ENCODE measurements at regions of chr4 and their contacts with region 1.

Region 1: DNA sequence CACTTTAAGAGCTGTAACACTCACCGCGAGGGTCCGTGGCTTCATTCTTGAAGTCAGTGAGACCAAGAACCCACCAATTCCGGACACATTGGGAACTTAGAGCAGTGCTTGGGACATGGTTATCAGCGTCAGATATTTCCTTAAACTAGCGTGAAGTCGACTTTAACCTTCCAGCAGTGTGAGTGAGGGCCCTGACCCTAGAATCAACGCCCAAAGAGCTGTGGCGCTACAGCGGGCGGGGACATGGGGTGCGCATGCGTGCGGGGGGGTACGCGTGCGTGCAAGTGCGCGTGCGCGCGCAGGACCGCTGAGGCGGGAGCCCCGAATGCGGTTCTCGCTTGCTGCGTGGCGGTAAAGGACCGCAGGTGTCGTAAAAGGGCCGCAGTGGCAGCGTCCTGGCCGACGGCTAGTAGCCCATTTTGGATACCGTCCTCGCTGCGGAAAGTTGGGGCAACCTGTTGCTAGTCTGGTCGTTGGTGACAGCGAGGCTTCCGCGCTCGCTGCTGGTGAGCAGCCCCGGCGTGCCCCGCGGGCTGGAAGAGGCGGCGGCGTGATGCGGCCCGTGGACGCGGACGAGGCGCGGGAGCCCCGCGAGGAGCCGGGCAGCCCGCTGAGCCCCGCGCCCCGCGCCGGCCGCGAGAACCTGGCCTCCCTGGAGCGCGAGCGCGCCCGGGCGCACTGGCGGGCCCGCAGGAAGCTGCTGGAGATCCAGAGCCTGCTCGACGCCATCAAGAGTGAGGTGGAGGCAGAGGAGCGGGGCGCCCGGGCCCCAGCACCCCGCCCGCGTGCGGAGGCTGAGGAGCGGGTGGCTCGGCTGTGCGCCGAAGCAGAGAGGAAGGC is 19.8 kb upstream of the S100P start:
- DNase-seq: peak; percentile 89 to 97 (median 95)
- ATAC-seq: peak; percentile 93
- H3K4me3 ChIP-seq: peak overlapping the region; percentile 74
- H3K4me3 Mint-ChIP-seq: peak overlapping the region; percentile 90 to 100 (median 98)
- H3K27ac ChIP-seq: peak overlapping the region; percentile 83
- H3K27ac Mint-ChIP-seq: peak overlapping the region; percentile 88 to 100 (median 98)
- H3K4me1 ChIP-seq: peaks cover 30 to 34% of the 10 kb centered on the region in 2 donors
- H3K4me1 Mint-ChIP-seq: peaks cover 33 to 53% (median 50%) of the 10 kb centered on the region in 7 donors
- H3K27me3 ChIP-seq: no peaks in the 10 kb centered on the region
- H3K27me3 Mint-ChIP-seq: peaks cover 0 to 3% (median 0%) of the 10 kb centered on the region in 5 donors

Region 2: DNA sequence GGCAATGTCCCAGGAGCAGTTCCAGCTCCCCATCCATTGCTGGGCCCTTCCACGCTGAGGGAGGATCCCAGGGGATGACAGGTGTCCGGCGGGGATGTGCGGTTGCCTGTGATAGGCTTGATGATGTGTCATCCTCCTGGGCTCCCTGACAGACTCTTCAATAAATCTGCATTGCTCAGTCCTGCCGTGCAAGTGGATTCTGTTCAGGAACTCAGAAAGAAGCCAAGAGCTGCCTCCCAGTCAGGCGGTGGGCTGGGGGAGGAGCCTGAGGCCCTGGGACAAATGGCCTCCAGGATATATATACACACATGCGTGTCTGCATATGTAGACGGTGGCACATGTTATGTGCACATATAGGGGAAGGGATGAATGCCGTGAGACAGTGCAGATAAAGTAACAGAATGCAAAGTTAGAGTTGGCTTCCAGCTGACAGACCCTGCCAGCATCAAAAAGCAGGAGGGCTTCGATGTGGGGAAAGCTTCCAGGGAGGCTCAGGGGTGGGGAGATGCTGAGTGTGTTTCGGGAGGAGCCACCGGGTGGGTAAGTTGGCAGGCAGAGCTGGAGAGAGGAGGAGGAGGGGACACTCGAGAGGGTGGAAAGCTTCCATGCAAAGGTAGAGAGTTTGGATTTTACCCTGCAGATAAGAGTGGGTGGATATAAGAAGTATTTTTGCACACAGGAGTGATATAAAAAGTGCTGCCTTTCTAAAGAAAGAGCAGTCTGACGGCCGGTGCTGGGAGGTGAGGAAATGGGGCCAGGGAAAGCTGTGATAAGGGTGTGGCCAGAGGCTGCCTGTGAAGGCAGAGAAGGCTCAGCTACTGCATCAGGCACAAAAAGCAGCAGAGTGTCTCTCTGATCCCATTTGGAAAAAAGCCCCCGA is 752.5 kb before region 1 on chr4:
- CTCF ChIA-PET with region 1: no interaction called
- POLR2A ChIA-PET with region 1: no interaction called
- intact Hi-C with region 1: no loop called
- DNase-seq: no peak
- ATAC-seq: no peak
- H3K4me3 ChIP-seq: no peak overlapping the region
- H3K4me3 Mint-ChIP-seq: no peak overlapping the region
- H3K27ac ChIP-seq: no peak overlapping the region
- H3K27ac Mint-ChIP-seq: no peak overlapping the region
- H3K4me1 ChIP-seq: no peaks in the 10 kb centered on the region
- H3K4me1 Mint-ChIP-seq: peaks cover 0 to 2% (median 0%) of the 10 kb centered on the region in 7 donors
- H3K27me3 ChIP-seq: no peaks in the 10 kb centered on the region
- H3K27me3 Mint-ChIP-seq: peaks cover 0 to 50% (median 11%) of the 10 kb centered on the region in 5 donors

Region 3: DNA sequence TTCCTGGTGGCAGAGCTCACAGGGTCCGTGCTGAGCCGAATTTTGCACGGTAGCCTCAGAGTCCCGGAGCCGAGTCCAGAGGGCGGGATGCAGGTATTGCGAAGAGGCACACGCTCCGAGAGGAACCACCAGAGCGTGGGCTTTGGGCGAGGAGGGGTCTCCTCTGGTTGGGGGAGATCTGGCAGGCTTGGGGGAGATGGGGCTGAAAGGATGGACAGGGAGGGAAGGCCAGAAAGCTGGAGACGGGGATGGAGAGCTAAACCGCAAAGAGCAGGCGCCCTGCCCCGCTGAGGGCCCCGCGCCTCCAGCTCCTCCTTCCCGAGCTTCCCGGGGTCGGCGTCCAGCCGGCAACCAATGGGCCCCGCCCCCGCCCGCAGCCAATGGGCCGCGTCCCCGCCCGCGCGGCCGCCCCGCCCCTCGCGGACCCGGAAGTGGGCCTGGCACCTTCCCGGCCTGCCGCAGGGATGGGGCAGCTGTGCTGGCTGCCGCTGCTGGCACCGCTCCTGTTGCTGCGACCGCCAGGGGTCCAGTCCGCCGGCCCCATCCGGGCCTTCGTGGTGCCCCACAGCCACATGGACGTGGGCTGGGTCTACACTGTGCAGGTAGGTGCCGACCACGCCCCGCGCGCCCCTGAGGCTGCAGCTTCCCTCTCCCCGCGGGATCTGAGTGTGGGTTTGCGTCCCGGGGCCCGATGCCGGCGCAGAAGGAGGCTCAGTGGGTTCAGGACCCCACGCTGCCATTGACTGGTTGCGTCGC is 99.0 kb before region 1 on chr4 and contains the start of gene MAN2B2:
- CTCF ChIA-PET with region 1: no interaction called
- POLR2A ChIA-PET with region 1: interaction called, 15 read pairs
- intact Hi-C with region 1: loop called in 1 of 2 experiments (anchors 5 kb)
- DNase-seq: peak; percentile 68 to 92 (median 75)
- ATAC-seq: peak; percentile 96
- H3K4me3 ChIP-seq: peak within 1 kb of the TSS; percentile 92
- H3K4me3 Mint-ChIP-seq: peak within 1 kb of the TSS; percentile 84 to 94 (median 90)
- H3K27ac ChIP-seq: peak within 1 kb of the TSS; percentile 83
- H3K27ac Mint-ChIP-seq: peak within 1 kb of the TSS; percentile 68 to 91 (median 84)
- H3K4me1 ChIP-seq: peaks cover 5 to 9% of the 10 kb centered on the region in 2 donors
- H3K4me1 Mint-ChIP-seq: peaks cover 6 to 13% (median 8%) of the 10 kb centered on the region in 7 donors
- H3K27me3 ChIP-seq: no peaks in the 10 kb centered on the region
- H3K27me3 Mint-ChIP-seq: peaks cover 0 to 17% (median 0%) of the 10 kb centered on the region in 5 donors
- total RNA-seq, gene MAN2B2: 28.7 to 56.2 (median 39.4) TPM

Region 4: DNA sequence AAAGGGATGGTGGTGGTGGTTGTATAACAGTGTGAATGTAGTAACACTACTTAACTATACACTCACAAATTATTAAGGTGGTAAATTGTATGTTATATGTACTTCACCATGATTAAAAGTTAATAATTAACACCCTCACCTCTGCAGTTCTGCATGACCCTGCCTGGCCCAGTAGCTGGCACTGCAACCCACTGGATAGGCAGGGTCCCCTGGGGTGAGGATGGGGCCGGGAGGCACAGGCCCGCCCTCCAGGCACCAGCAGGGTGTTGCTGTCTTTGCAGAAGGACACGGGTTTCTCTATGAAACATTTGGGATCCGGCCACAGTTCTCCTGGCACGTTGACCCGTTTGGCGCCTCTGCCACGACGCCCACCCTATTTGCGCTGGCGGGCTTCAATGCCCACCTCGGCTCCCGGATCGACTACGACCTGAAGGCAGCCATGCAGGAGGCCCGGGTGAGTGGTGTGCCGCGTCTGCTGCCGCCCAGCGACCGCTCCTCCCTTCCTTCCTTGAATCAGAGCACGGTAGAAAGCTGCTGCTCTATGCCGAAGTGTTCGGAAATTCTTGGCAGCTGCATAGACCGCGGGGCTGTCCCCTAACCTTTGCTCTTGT is 87.1 kb before region 1 on chr4:
- CTCF ChIA-PET with region 1: no interaction called
- POLR2A ChIA-PET with region 1: no interaction called
- intact Hi-C with region 1: no loop called
- DNase-seq: no peak
- ATAC-seq: no peak
- H3K4me3 ChIP-seq: no peak overlapping the region
- H3K4me3 Mint-ChIP-seq: no peak overlapping the region
- H3K27ac ChIP-seq: no peak overlapping the region
- H3K27ac Mint-ChIP-seq: no peak overlapping the region
- H3K4me1 ChIP-seq: no peaks in the 10 kb centered on the region
- H3K4me1 Mint-ChIP-seq: peaks cover 0 to 4% (median 0%) of the 10 kb centered on the region in 7 donors
- H3K27me3 ChIP-seq: no peaks in the 10 kb centered on the region
- H3K27me3 Mint-ChIP-seq: no peaks in the 10 kb centered on the region

Region 5: DNA sequence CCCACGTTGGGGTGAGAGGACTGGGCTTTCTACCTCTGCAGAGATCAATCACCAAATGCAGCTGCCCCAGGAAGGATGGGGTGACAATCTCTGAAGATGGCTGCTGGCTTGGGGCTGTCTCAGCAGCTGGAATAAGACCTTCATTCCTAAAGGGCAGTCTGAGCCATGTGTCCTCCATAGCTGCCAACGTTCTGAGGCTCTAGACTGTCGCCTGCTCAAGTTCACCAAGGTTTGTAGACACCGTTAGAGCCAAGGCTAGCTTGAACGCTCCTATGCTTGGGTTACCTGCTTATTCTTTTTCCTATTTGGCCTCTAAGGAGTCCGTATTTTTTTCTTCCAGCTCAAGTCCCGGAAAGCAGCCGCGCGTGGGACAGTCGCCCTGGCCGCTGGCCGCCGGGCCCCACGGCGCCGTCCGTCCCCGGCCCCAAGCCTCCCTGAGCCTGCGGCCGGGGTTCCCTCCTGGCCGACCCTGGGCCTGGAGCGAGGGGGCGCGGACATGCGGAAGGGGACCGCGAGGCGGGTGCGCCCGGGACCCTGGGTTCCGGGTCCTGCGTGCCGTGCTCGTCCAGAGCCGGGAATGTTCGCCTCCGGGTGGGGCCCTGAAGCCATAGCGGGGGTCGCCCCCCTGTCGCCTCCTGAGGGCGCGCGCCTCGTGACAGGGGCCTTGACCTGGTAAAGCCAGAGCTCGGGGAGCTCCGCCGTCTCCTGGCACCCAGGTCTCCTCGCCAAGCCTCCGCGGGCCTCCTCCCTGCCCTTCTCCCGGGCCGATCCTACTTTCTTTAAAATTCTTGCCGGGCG is 10.1 kb before region 1 on chr4:
- CTCF ChIA-PET with region 1: interaction called, 15 read pairs
- POLR2A ChIA-PET with region 1: interaction called, 55 read pairs
- intact Hi-C with region 1: loop called (anchors 1 kb)
- DNase-seq: no peak
- ATAC-seq: no peak
- H3K4me3 ChIP-seq: peak overlapping the region; percentile 35
- H3K4me3 Mint-ChIP-seq: peak overlapping the region in 7 of 10 donors; percentile 12 to 81 (median 38)
- H3K27ac ChIP-seq: no peak overlapping the region
- H3K27ac Mint-ChIP-seq: peak overlapping the region in 1 of 9 donors; percentile 55
- H3K4me1 ChIP-seq: peaks cover 4 to 12% of the 10 kb centered on the region in 2 donors
- H3K4me1 Mint-ChIP-seq: peaks cover 0 to 9% (median 5%) of the 10 kb centered on the region in 7 donors
- H3K27me3 ChIP-seq: peaks cover 0 to 2% of the 10 kb centered on the region in 2 donors
- H3K27me3 Mint-ChIP-seq: peaks cover 0 to 49% (median 0%) of the 10 kb centered on the region in 5 donors

Region 6: GRCh38 chr4:6695660-6696630 is 22.1 kb after region 1 on chr4:
- CTCF ChIA-PET with region 1: interaction called, 61 read pairs
- POLR2A ChIA-PET with region 1: interaction called, 696 read pairs
- intact Hi-C with region 1: loop called (anchors 1 kb)
- DNase-seq: peak in 8 of 9 donors; percentile 53 to 82 (median 75)
- ATAC-seq: peak; percentile 89
- H3K4me3 ChIP-seq: peak overlapping the region; percentile 17
- H3K4me3 Mint-ChIP-seq: peak overlapping the region; percentile 42 to 84 (median 74)
- H3K27ac ChIP-seq: peak overlapping the region; percentile 77
- H3K27ac Mint-ChIP-seq: peak overlapping the region; percentile 93 to 99 (median 97)
- H3K4me1 ChIP-seq: peaks cover 84 to 85% of the 10 kb centered on the region in 2 donors
- H3K4me1 Mint-ChIP-seq: peaks cover 59 to 89% (median 82%) of the 10 kb centered on the region in 7 donors
- H3K27me3 ChIP-seq: no peaks in the 10 kb centered on the region
- H3K27me3 Mint-ChIP-seq: no peaks in the 10 kb centered on the region

Region 7: GRCh38 chr4:6709230-6710114 is 35.6 kb after region 1 on chr4 and contains the start of gene MRFAP1L1:
- CTCF ChIA-PET with region 1: interaction called, 44 read pairs
- POLR2A ChIA-PET with region 1: interaction called, 696 read pairs
- intact Hi-C with region 1: loop called (anchors 1 kb)
- DNase-seq: peak; percentile 91 to 98 (median 97)
- ATAC-seq: peak; percentile 99
- H3K4me3 ChIP-seq: peak within 1 kb of the TSS; percentile 93
- H3K4me3 Mint-ChIP-seq: peak within 1 kb of the TSS; percentile 96 to 100 (median 98)
- H3K27ac ChIP-seq: peak within 1 kb of the TSS; percentile 86
- H3K27ac Mint-ChIP-seq: peak within 1 kb of the TSS; percentile 95 to 99 (median 98)
- H3K4me1 ChIP-seq: peaks cover 38 to 48% of the 10 kb centered on the region in 2 donors
- H3K4me1 Mint-ChIP-seq: peaks cover 45 to 71% (median 65%) of the 10 kb centered on the region in 7 donors
- H3K27me3 ChIP-seq: no peaks in the 10 kb centered on the region
- H3K27me3 Mint-ChIP-seq: peaks cover 0 to 8% (median 0%) of the 10 kb centered on the region in 5 donors
- total RNA-seq, gene MRFAP1L1: 24.8 to 124 (median 73.6) TPM

Region 8: GRCh38 chr4:6873792-6874461 is 200.0 kb after region 1 on chr4:
- CTCF ChIA-PET with region 1: interaction called, 30 read pairs
- POLR2A ChIA-PET with region 1: interaction called, 29 read pairs
- intact Hi-C with region 1: loop called (anchors 1 to 2 kb)
- DNase-seq: peak; percentile 62 to 80 (median 73)
- ATAC-seq: peak; percentile 81
- H3K4me3 ChIP-seq: no peak overlapping the region
- H3K4me3 Mint-ChIP-seq: no peak overlapping the region
- H3K27ac ChIP-seq: no peak overlapping the region
- H3K27ac Mint-ChIP-seq: peak overlapping the region in 3 of 9 donors; percentile 53 to 59 (median 54)
- H3K4me1 ChIP-seq: no peaks in the 10 kb centered on the region
- H3K4me1 Mint-ChIP-seq: peaks cover 0 to 20% (median 6%) of the 10 kb centered on the region in 7 donors
- H3K27me3 ChIP-seq: no peaks in the 10 kb centered on the region
- H3K27me3 Mint-ChIP-seq: no peaks in the 10 kb centered on the region

Region 9: DNA sequence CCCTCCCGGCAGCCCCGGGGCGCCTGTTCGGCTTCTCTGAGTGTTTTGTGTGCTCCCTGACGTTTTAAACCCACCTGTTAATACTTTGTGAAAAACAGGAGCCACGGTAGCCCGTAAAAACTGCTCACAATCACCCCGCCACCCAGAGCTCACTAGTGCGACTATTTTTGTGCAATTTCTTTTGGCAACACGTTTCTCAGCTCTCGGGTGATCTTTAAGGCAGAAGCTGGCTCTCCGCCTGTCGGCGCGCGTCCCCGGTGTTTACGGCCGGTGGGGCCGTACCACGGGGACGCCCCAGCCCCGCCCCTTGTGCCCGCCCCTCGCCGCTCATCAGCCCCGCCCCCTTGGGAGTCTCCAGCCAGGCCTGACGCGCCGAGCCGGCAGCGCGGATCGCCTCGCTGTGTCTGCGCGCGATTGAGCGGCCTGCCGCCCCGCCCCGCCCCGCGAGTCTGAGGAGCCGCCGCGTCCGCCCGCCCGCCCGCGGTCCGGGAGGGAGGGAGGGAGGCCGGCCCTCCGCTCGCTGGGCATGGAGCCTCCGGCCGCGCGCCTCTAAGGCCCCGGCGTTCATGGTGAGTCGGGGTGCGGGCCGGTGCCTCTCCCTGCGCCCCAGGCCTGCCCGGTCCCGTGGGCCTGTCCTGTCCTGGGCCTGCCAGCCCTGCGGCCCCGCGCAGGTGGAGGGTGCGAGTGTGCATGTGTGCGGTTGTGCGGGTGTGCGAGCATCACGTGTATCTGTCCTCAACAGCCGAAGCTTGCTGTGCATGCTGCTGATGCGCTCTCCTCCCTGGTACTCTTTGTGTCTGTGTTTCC is 313.1 kb after region 1 on chr4:
- CTCF ChIA-PET with region 1: interaction called, 3 read pairs
- POLR2A ChIA-PET with region 1: interaction called, 4 read pairs
- intact Hi-C with region 1: loop called (anchors 1 to 2 kb)
- DNase-seq: peak; percentile 87 to 95 (median 92)
- ATAC-seq: peak; percentile 98
- H3K4me3 ChIP-seq: peak overlapping the region; percentile 82
- H3K4me3 Mint-ChIP-seq: peak overlapping the region; percentile 94 to 100 (median 97)
- H3K27ac ChIP-seq: peak overlapping the region; percentile 86
- H3K27ac Mint-ChIP-seq: peak overlapping the region; percentile 89 to 99 (median 98)
- H3K4me1 ChIP-seq: peaks cover 29 to 37% of the 10 kb centered on the region in 2 donors
- H3K4me1 Mint-ChIP-seq: peaks cover 57 to 93% (median 84%) of the 10 kb centered on the region in 7 donors
- H3K27me3 ChIP-seq: no peaks in the 10 kb centered on the region
- H3K27me3 Mint-ChIP-seq: no peaks in the 10 kb centered on the region